KBM-7 (cell line): ENCODE measurements at regions of chr3 and their contacts with region 1.

Region 1: DNA sequence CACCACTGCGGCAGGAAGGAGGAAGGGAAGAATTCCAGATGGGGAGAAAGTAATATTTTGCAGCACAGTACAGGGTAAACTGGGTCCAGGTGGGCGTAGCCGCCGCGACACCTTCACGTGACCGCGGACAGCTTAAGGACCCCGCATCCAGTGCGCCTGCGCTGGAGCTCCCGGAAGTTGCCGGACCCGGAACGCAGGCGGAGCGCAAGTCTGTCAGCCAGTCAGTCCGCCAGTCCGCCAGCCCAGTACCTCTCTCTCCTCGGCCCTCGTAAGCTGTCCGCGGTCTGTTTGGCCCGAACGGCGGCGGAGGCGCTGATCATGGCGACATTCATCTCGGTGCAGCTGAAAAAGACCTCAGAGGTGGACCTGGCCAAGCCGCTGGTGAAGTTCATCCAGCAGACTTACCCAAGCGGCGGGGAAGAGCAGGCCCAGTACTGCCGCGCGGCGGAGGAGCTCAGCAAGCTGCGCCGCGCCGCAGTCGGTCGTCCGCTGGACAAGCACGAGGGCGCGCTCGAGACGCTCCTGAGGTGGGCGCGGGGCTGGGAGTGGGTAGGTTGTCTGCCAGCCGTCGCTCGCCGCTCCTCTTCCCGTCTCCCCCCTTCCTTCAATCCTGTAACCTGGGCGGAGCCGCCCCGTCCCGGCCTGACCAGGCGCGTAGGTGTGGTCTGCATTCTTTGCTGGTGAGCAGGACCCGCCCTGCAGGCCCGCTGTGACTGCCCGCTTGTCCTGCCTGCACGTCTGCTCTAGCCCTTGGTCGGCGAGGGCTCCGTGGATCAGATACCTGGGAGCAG is at the start of gene PDCD6IP:
- DNase-seq: peak; percentile 91

Region 2: DNA sequence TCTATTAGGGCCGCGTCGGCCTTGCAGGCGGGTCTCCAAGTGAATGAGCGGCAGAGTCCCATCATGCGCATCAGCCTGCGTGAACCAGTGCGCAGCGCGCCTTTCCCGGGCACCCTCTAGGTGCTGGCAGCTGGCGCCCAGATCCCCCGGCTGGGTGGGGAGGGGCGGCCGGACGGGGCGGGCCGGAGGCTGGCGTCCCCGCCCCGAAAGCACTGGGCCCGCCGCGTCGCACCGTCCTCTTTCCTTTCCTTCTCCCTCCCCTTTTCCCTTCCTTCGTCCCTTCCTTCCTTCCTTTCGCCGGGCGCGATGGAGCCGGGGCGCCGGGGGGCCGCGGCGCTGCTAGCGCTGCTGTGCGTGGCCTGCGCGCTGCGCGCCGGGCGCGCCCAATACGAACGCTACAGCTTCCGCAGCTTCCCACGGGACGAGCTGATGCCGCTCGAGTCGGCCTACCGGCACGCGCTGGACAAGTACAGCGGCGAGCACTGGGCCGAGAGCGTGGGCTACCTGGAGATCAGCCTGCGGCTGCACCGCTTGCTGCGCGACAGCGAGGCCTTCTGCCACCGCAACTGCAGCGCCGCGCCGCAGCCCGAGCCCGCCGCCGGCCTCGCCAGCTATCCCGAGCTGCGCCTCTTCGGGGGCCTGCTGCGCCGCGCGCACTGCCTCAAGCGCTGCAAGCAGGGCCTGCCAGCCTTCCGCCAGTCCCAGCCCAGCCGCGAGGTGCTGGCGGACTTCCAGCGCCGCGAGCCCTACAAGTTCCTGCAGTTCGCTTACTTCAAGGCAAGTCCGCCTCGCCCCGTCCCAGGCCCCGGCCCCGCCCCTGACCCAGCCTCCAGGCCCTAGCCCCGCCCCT is 684.6 kb before region 1 on chr3 and contains the start of gene CRTAP:
- in situ Hi-C with region 1: loop called (anchors 25 kb)
- DNase-seq: peak; percentile 95

Region 3: GRCh38 chr3:33636125-33636850 is 162.3 kb before region 1 on chr3:
- in situ Hi-C with region 1: loop called (anchors 25 kb)
- DNase-seq: peak; percentile 80

Region 4: DNA sequence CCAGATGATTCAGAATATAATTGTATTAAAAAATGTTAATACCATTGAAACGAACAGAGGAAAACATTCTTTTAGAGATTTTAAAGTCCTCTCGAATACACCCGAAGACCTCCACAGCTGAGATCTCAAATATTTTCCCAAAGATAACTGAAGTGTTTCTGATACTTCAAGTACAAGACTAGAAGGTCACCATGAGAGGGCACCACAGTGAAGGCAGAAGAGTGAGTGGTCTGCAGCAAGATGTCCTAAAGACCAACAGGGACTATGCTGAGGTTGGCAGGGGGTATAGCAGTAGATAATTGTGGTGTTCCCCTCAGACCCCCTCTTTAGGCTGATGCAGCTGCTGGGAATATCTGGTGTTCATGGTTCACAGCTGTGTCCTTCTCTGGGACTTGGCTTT is 156.3 kb after region 1 on chr3:
- in situ Hi-C with region 1: no loop called
- DNase-seq: no peak